ENCODE measurements at regions of chr13 and their contacts with region 1.

Region 1: GRCh38 chr13:44435142-44435982 is 61.7 kb downstream of the SERP2 start:
- DNase-seq: peak; percentile 94
- ATAC-seq: peak; percentile 84
- H3K4me3 Mint-ChIP-seq: peak overlapping the region; percentile 73
- H3K27ac Mint-ChIP-seq: peak overlapping the region; percentile 55
- H3K4me1 Mint-ChIP-seq: peaks cover 18% of the 10 kb centered on the region
- H3K27me3 Mint-ChIP-seq: peaks cover 11% of the 10 kb centered on the region

Region 2: GRCh38 chr13:43905435-43906031 is 529.8 kb before region 1 on chr13:
- CTCF ChIA-PET with region 1: interaction called, 48 read pairs
- POLR2A ChIA-PET with region 1: no interaction called
- intact Hi-C with region 1: loop called (anchors 1 kb)
- DNase-seq: peak; percentile 27
- ATAC-seq: peak; percentile 64
- H3K4me3 Mint-ChIP-seq: no peak overlapping the region
- H3K27ac Mint-ChIP-seq: no peak overlapping the region
- H3K4me1 Mint-ChIP-seq: peaks cover 7% of the 10 kb centered on the region
- H3K27me3 Mint-ChIP-seq: peaks cover 5% of the 10 kb centered on the region

Region 3: GRCh38 chr13:44141725-44142539 is 293.4 kb before region 1 on chr13:
- CTCF ChIA-PET with region 1: interaction called, 6 read pairs
- POLR2A ChIA-PET with region 1: no interaction called
- intact Hi-C with region 1: loop called (anchors 1 kb)
- DNase-seq: peak; percentile 96
- ATAC-seq: peak; percentile 100
- H3K4me3 Mint-ChIP-seq: peak overlapping the region; percentile 87
- H3K27ac Mint-ChIP-seq: peak overlapping the region; percentile 90
- H3K4me1 Mint-ChIP-seq: peaks cover 15% of the 10 kb centered on the region
- H3K27me3 Mint-ChIP-seq: peaks cover 4% of the 10 kb centered on the region

Region 4: DNA sequence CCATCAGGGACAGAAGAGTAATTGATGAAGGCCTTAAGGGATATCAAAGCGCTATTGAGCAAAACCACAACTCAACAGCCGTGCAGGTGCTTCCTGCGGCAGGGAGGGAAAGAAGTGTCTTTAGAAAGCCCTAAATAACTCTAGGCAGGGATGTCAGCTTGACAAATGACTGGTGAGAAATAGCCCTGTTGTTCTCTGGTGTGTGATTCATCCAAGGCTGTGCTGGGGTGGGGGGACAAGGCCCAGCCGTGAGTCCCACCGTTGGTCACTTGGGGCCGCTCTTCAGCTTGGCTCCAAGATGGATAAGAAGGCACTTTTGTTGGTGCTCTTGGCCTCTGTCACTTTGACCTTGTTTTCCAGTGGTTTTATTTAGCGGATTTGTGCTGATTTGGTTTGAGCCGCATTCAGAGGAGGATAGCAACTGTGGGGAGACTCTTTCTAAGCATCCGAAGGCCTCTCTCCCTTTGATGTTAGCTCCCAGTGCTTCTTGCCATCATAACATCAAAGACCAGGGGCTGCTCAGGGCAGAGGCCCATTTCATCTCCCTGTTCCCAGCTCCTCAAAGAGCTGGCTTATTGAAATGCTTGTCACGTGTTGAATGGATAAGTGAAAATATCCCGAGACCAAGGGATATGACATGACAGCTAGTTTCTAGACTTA is 192.0 kb before region 1 on chr13:
- CTCF ChIA-PET with region 1: interaction called, 4 read pairs
- POLR2A ChIA-PET with region 1: no interaction called
- intact Hi-C with region 1: loop called (anchors 5 kb)
- DNase-seq: peak; percentile 60
- ATAC-seq: peak; percentile 96
- H3K4me3 Mint-ChIP-seq: no peak overlapping the region
- H3K27ac Mint-ChIP-seq: no peak overlapping the region
- H3K4me1 Mint-ChIP-seq: peaks cover 10% of the 10 kb centered on the region
- H3K27me3 Mint-ChIP-seq: peaks cover 7% of the 10 kb centered on the region

Region 5: GRCh38 chr13:44274452-44275205 is 160.7 kb before region 1 on chr13:
- CTCF ChIA-PET with region 1: interaction called, 10 read pairs
- POLR2A ChIA-PET with region 1: no interaction called
- intact Hi-C with region 1: loop called in 1 of 2 experiments (anchors 1 kb)
- DNase-seq: peak; percentile 21
- ATAC-seq: peak; percentile 97
- H3K4me3 Mint-ChIP-seq: peak overlapping the region; percentile 55
- H3K27ac Mint-ChIP-seq: peak overlapping the region; percentile 91
- H3K4me1 Mint-ChIP-seq: peaks cover 59% of the 10 kb centered on the region
- H3K27me3 Mint-ChIP-seq: no peaks in the 10 kb centered on the region

Region 6: DNA sequence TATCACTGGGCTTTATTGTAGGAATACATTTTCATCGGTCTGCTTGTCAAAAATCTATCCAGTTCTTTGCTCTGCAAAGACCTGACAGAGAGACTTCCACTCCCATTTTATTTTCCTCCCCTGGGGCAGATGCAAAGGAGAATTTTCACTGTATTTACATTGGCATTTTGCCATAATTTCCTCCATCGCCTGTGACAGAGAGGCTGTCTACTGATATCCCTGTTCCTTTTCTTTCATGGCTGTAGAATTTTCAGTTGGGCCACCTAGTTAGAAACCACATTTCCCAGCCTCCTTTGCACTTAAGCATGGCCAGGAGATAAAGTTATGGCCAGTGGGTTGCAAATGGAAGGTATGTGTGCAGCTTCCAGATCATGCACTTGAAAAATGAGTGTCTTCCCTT is 464.6 kb after region 1 on chr13:
- CTCF ChIA-PET with region 1: no interaction called
- POLR2A ChIA-PET with region 1: no interaction called
- intact Hi-C with region 1: no loop called
- DNase-seq: no peak
- ATAC-seq: no peak
- H3K4me3 Mint-ChIP-seq: no peak overlapping the region
- H3K27ac Mint-ChIP-seq: no peak overlapping the region
- H3K4me1 Mint-ChIP-seq: no peaks in the 10 kb centered on the region
- H3K27me3 Mint-ChIP-seq: peaks cover 7% of the 10 kb centered on the region